SK-N-SH (cell line): ENCODE measurements at regions of chr4 and their contacts with region 1.

Region 1: GRCh38 chr4:41214136-41214824 is at the start of gene APBB2:
- DNase-seq: peak; percentile 98
- H3K4me3 ChIP-seq: peak within 1 kb of the TSS; percentile 75 to 85
- H3K27ac ChIP-seq: peak within 1 kb of the TSS; percentile 71 to 93
- H3K4me1 ChIP-seq: peaks cover 4 to 21% of the 10 kb centered on the region in 2 experiments; a peak in 3 of 4 replicates
- H3K27me3 ChIP-seq: no peaks in the 10 kb centered on the region
- CTCF ChIP-seq: peak; percentile 74
- EP300 ChIP-seq: 0 out of 4 replicates have a peak, but pooled peaks of 1 of the 2 experiments have one; percentile 7
- RAD21 ChIP-seq: peak; percentile 72
- polyA plus RNA-seq, gene APBB2: 49.8 and 56.6 TPM in 2 replicates

Region 2: GRCh38 chr4:40908702-40909362 is 305.4 kb before region 1 on chr4:
- CTCF ChIA-PET with region 1: interaction called, 29 read pairs
- POLR2A ChIA-PET with region 1: no interaction called
- DNase-seq: peak; percentile 77
- H3K4me3 ChIP-seq: peak overlapping the region in 1 of 2 experiments; percentile 43; a peak in 1 of 4 replicates
- H3K27ac ChIP-seq: peak overlapping the region; percentile 83 to 92
- H3K4me1 ChIP-seq: peaks cover 13 to 24% of the 10 kb centered on the region in 2 experiments
- H3K27me3 ChIP-seq: no peaks in the 10 kb centered on the region
- CTCF ChIP-seq: peak; percentile 96
- EP300 ChIP-seq: no peak
- RAD21 ChIP-seq: peak; percentile 80

Region 3: GRCh38 chr4:40924096-40924792 is 290.0 kb before region 1 on chr4:
- CTCF ChIA-PET with region 1: interaction called, 196 read pairs
- POLR2A ChIA-PET with region 1: interaction called, 3 read pairs
- DNase-seq: peak; percentile 83
- H3K4me3 ChIP-seq: peak overlapping the region in 1 of 2 experiments; percentile 10; a peak in 1 of 4 replicates
- H3K27ac ChIP-seq: no peak overlapping the region
- H3K4me1 ChIP-seq: no peaks in the 10 kb centered on the region; a peak in 1 of 4 replicates
- H3K27me3 ChIP-seq: no peaks in the 10 kb centered on the region
- CTCF ChIP-seq: peak; percentile 94
- EP300 ChIP-seq: no peak
- RAD21 ChIP-seq: peak; percentile 79

Region 4: GRCh38 chr4:40956721-40957255 is 257.5 kb before region 1 on chr4:
- CTCF ChIA-PET with region 1: interaction called, 19 read pairs
- POLR2A ChIA-PET with region 1: no interaction called
- DNase-seq: no peak
- H3K4me3 ChIP-seq: no peak overlapping the region
- H3K27ac ChIP-seq: peak overlapping the region in 1 of 2 experiments; percentile 13; a peak in 2 of 4 replicates
- H3K4me1 ChIP-seq: peaks cover 1 to 2% of the 10 kb centered on the region in 2 experiments; a peak in 1 of 4 replicates
- H3K27me3 ChIP-seq: no peaks in the 10 kb centered on the region
- CTCF ChIP-seq: no peak
- EP300 ChIP-seq: no peak
- RAD21 ChIP-seq: no peak

Region 5: DNA sequence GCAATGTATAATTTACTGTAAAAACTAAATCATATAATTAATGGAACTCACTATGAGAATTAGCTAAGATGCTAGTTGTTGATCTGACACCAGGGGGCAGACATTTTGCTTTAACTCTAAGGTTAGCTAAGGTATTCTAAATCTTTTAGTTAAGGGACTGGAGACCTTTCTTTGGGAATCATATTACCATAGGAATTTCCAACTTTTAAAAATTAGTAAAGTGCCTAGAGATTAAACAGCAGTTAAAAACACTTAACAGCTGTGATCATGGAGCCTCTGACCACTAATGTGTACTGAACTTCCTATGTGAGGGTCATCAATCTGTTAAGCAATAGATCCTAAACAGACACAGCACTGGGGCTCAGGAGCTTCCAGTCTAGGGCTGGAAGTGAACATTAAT is 237.9 kb before region 1 on chr4:
- CTCF ChIA-PET with region 1: interaction called, 155 read pairs
- POLR2A ChIA-PET with region 1: interaction called, 8 read pairs
- DNase-seq: peak; percentile 55
- H3K4me3 ChIP-seq: no peak overlapping the region
- H3K27ac ChIP-seq: no peak overlapping the region
- H3K4me1 ChIP-seq: 0 out of 4 replicates have a peak, but pooled peaks cover 0 to 12% of the 10 kb centered on the region in 2 experiments
- H3K27me3 ChIP-seq: no peaks in the 10 kb centered on the region
- CTCF ChIP-seq: peak; percentile 85
- EP300 ChIP-seq: no peak
- RAD21 ChIP-seq: peak; percentile 69

Region 6: DNA sequence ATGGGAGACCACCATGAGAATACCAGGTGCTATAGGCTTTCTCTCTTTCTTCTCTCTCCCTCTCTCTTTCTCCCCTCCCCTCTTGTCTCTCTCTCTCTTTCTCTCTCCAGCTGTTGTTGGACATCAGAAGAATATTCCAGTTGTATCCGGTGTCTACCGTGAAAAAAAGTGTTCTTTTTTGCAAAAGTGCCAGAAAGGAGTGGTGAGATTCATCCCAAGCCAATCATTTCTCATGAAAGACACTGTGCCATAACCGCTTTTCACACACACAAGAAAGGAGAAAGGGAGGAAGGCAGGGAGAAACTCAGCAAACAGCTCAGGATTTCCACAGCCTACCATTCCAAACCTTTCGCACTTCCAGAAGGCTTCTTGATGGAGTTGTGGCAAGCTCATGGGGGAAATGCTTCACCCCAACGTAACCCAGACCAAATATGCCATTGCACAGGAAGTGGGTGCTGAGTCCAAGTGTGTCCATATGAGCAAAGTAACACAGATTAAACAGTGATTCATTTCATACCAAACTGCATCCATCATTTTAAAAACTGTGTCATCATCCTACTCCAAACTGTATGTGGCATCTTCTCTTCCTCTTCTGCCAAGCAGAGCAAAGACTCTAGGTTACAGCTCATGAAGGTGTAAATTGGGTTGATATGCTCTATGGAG is 223.9 kb before region 1 on chr4:
- CTCF ChIA-PET with region 1: interaction called, 13 read pairs
- POLR2A ChIA-PET with region 1: no interaction called
- DNase-seq: no peak
- H3K4me3 ChIP-seq: 0 out of 4 replicates have a peak overlapping the region, but pooled peaks of 1 of the 2 experiments have one; percentile 39
- H3K27ac ChIP-seq: peak overlapping the region; percentile 48 to 92; a peak in 3 of 4 replicates
- H3K4me1 ChIP-seq: peaks cover 6 to 33% of the 10 kb centered on the region in 2 experiments
- H3K27me3 ChIP-seq: no peaks in the 10 kb centered on the region
- CTCF ChIP-seq: no peak
- EP300 ChIP-seq: peak in 1 of 2 experiments; percentile 80; a peak in 1 of 4 replicates
- RAD21 ChIP-seq: no peak